Naive thymus-derived CD4-positive, alpha-beta T cell (primary cell): ENCODE measurements at regions of chr1 and their contacts with region 1.

Region 1: DNA sequence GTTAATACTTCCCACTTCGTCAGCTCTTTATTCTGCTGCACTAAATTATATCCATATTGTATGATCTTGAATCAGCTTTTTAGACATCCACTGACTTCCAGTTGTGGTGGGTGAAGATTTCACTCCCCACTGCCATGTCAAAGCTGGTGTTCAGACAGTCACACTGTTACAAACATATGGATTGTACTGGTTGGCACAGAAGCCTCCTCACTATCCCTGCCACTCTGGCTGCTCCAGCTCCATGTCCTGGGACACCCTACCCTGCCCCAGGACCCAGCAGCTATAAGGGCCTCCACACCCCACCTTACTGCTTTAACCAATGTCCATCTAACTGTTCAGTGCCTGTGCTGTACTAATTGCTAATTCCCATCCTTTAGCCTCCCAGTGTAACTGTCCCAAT is 32.0 kb upstream of the BATF3 start:
- DNase-seq: no peak
- ATAC-seq: no peak
- H3K4me3 ChIP-seq: no peak overlapping the region
- H3K4me3 Mint-ChIP-seq: no peak overlapping the region
- H3K27ac ChIP-seq: no peak overlapping the region
- H3K27ac Mint-ChIP-seq: peak overlapping the region in 3 of 9 donors; percentile 17 to 44 (median 27)
- H3K4me1 ChIP-seq: no peaks in the 10 kb centered on the region
- H3K4me1 Mint-ChIP-seq: peaks cover 0 to 17% (median 0%) of the 10 kb centered on the region in 7 donors
- H3K27me3 ChIP-seq: no peaks in the 10 kb centered on the region
- H3K27me3 Mint-ChIP-seq: no peaks in the 10 kb centered on the region

Region 2: DNA sequence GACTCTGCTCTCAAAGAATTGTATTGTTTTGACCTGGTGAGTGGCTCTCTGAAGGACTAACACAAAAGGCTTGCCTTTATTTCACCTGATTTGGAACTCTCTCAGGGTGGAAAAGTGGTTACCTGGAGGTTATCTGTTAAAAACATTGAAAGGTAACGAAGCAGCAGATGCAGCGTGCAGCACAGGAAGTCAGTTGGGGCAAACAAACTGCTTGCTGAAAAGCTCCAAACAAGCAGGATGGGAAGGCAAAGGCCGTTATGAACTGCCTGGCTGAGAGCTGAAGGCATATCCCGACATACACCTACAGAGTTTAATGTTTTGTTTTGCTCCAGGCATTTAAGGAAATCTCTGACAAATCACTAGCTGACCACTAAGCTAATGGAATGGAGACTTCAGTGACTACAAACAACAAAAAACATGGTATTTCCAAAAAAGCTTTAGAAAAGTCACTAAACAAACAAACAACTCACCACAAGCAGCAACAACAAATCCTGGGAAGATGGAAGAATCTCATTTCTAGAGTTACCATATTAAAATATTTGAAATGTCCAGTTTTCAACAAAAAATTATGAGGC is 12.4 kb after region 1 on chr1:
- CTCF ChIA-PET with region 1: no interaction called
- POLR2A ChIA-PET with region 1: no interaction called
- intact Hi-C with region 1: loop called in 1 of 2 experiments (anchors 2 kb)
- DNase-seq: peak in 5 of 9 donors; percentile 20 to 47 (median 40)
- ATAC-seq: peak; percentile 36
- H3K4me3 ChIP-seq: no peak overlapping the region
- H3K4me3 Mint-ChIP-seq: peak overlapping the region in 9 of 10 donors; percentile 18 to 78 (median 60)
- H3K27ac ChIP-seq: peak overlapping the region; percentile 52
- H3K27ac Mint-ChIP-seq: peak overlapping the region; percentile 6 to 88 (median 83)
- H3K4me1 ChIP-seq: peaks cover 0 to 10% of the 10 kb centered on the region in 2 donors
- H3K4me1 Mint-ChIP-seq: peaks cover 21 to 49% (median 29%) of the 10 kb centered on the region in 7 donors
- H3K27me3 ChIP-seq: no peaks in the 10 kb centered on the region
- H3K27me3 Mint-ChIP-seq: no peaks in the 10 kb centered on the region